ENCODE measurements at regions of chr17 and their contacts with region 1.

Region 1: DNA sequence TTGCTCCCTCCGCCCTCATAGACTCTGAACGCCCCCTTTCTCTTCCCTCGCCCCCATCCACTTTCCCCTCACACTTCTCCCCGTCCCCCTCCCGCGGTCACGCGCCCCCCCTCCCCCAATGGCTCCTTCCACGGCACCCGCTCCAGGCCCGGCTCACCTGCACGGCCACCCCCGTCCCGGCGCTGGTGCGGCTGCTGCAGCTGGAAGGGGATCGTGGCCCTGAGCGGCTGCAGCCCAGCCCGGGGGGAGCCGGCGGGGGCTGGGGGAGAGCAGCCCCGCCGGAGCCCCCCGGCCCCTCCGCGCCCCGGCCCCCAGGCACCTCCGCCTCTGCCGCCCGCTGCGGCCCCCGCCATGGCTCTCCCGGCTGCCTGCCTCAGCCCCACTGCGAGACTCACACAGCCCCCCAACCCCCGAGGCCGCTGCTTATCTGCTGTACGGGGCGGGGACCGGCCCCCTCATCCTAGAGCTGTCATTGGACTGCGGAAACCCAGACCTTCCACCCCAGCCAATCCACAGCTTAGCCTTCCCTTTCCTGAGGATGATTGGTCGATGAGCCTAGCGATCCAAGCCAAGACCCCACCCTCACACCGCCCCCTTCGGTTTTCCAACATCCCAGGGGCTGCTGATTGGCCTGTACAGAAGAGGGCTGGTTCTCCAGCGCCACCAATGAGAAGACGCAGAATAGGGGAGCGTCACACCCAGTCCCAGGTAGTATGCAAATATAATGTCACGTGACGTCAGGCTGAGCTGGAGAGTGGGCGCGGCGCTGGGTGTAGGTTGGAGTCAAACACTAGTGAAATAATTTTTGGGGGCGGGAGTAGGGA is at the start of gene FAM117A:
- DNase-seq: peak; percentile 86 to 99 (median 98)
- ATAC-seq: peak; percentile 90
- H3K4me3 Mint-ChIP-seq: peak within 1 kb of the TSS; percentile 90 to 99 (median 94)
- H3K27ac Mint-ChIP-seq: peak within 1 kb of the TSS; percentile 83 to 98 (median 95)
- H3K4me1 Mint-ChIP-seq: peaks cover 27 to 56% (median 48%) of the 10 kb centered on the region in 4 donors
- H3K27me3 Mint-ChIP-seq: no peaks in the 10 kb centered on the region
- polyA plus RNA-seq, gene FAM117A: 36.9 to 53.6 (median 46.7) TPM

Region 2: GRCh38 chr17:49667854-49668253 is 96.1 kb before region 1 on chr17:
- POLR2A ChIA-PET with region 1: no interaction called
- DNase-seq: no peak
- ATAC-seq: peak; percentile 51 to 58
- H3K4me3 Mint-ChIP-seq: peak overlapping the region in 4 of 10 donors; percentile 7 to 47 (median 19)
- H3K27ac Mint-ChIP-seq: peak overlapping the region in 6 of 10 donors; percentile 3 to 69 (median 43)
- H3K4me1 Mint-ChIP-seq: peaks cover 28 to 74% (median 65%) of the 10 kb centered on the region in 4 donors
- H3K27me3 Mint-ChIP-seq: no peaks in the 10 kb centered on the region

Region 3: GRCh38 chr17:49715717-49716279 is 48.1 kb before region 1 on chr17:
- POLR2A ChIA-PET with region 1: interaction called, 92 read pairs
- DNase-seq: peak in 4 of 10 donors; percentile 14 to 62 (median 26)
- ATAC-seq: peak; percentile 59 to 70
- H3K4me3 Mint-ChIP-seq: peak overlapping the region in 7 of 10 donors; percentile 11 to 80 (median 48)
- H3K27ac Mint-ChIP-seq: peak overlapping the region; percentile 77 to 97 (median 88)
- H3K4me1 Mint-ChIP-seq: peaks cover 6 to 43% (median 18%) of the 10 kb centered on the region in 4 donors
- H3K27me3 Mint-ChIP-seq: no peaks in the 10 kb centered on the region

Region 4: GRCh38 chr17:49739641-49740271 is 24.2 kb before region 1 on chr17:
- POLR2A ChIA-PET with region 1: interaction called, 277 read pairs
- DNase-seq: peak; percentile 93 to 99 (median 96)
- ATAC-seq: peak; percentile 95 to 98
- H3K4me3 Mint-ChIP-seq: peak overlapping the region; percentile 82 to 97 (median 91)
- H3K27ac Mint-ChIP-seq: peak overlapping the region; percentile 97 to 100 (median 100)
- H3K4me1 Mint-ChIP-seq: peaks cover 51 to 98% (median 86%) of the 10 kb centered on the region in 4 donors
- H3K27me3 Mint-ChIP-seq: no peaks in the 10 kb centered on the region

Region 5: DNA sequence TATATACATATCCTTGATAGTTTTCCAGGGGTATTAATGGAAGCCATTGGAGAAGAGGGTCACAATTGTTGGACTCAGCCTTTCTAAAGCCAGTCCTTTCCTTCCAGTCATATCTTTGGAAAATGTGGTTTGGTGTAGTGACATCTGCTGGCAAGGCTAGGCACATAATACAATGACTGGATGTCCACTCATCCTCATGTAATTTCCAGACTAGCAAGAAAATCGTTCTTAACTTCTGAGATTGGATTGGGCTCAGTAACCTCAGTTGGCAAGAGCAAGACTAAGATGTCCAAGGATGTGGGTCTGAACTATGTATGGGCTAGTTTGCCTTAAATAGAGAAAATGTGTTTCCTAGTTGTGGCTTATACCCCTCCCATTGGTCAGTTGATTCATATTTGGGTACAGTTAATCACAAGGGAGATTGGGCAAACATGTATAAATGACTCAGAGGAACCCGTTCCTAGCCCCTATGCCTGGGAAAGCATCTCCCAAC is 15.8 kb after region 1 on chr17:
- POLR2A ChIA-PET with region 1: interaction called, 63 read pairs
- DNase-seq: peak in 2 of 10 donors; percentile 13 to 18
- ATAC-seq: peak in 1 of 2 donors; percentile 46
- H3K4me3 Mint-ChIP-seq: no peak overlapping the region
- H3K27ac Mint-ChIP-seq: no peak overlapping the region
- H3K4me1 Mint-ChIP-seq: peaks cover 0 to 5% (median 2%) of the 10 kb centered on the region in 4 donors
- H3K27me3 Mint-ChIP-seq: no peaks in the 10 kb centered on the region

Region 6: DNA sequence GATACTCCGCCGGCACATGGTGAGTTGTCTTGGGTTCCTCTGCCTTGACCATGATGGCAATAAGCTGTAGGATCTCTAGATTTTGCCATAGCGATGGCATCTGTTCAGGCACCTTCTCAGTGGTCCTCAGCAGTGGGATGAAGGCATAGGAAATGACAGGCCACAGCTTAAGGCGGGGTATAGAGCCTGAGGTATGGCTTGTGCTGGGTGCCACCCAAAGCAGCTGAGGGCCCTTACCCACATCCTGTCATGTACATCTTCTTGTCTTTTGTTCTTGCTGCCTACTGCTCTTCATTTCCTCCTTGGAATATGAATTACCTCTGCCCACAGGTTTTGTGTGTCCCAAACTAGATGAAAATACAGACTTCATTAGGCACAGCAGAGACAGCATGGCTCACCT is 54.0 kb after region 1 on chr17:
- POLR2A ChIA-PET with region 1: interaction called, 13 read pairs
- DNase-seq: peak; percentile 23 to 84 (median 70)
- ATAC-seq: peak; percentile 98 to 100
- H3K4me3 Mint-ChIP-seq: peak overlapping the region; percentile 58 to 90 (median 82)
- H3K27ac Mint-ChIP-seq: peak overlapping the region; percentile 84 to 99 (median 98)
- H3K4me1 Mint-ChIP-seq: peaks cover 34 to 86% (median 82%) of the 10 kb centered on the region in 4 donors
- H3K27me3 Mint-ChIP-seq: no peaks in the 10 kb centered on the region

Measured in naive thymus-derived CD8-positive, alpha-beta T cell (primary cell).